ENCODE measurements at regions of chr19 and their contacts with region 1.

Region 1: GRCh38 chr19:3094601-3095437 is 657 bp downstream of the GNA11 start:
- DNase-seq: peak in 4 of 9 experiments; percentile 43 to 59 (median 58)
- ATAC-seq: peak; percentile 6
- H3K4me3 ChIP-seq: peak overlapping the region; percentile 34 to 62
- H3K4me3 Mint-ChIP-seq: peak overlapping the region; percentile 77
- H3K27ac ChIP-seq: no peak overlapping the region
- H3K27ac Mint-ChIP-seq: peak overlapping the region; percentile 60
- H3K4me1 ChIP-seq: peaks cover 42% of the 10 kb centered on the region
- H3K4me1 Mint-ChIP-seq: peaks cover 24% of the 10 kb centered on the region
- H3K27me3 ChIP-seq: peaks cover 0 to 20% of the 10 kb centered on the region in 2 experiments
- H3K27me3 Mint-ChIP-seq: peaks cover 6% of the 10 kb centered on the region
- CTCF ChIP-seq: no peak

Region 2: GRCh38 chr19:2977001-2977685 is 117.7 kb before region 1 on chr19 and contains the start of gene TLE6:
- CTCF ChIA-PET with region 1: no interaction called
- POLR2A ChIA-PET with region 1: no interaction called
- intact Hi-C with region 1: loop called in 1 of 2 experiments (anchors 1 kb)
- DNase-seq: peak; percentile 87 to 96 (median 93)
- ATAC-seq: peak; percentile 99
- H3K4me3 ChIP-seq: peak within 1 kb of the TSS; percentile 67 to 84
- H3K4me3 Mint-ChIP-seq: peak within 1 kb of the TSS; percentile 93
- H3K27ac ChIP-seq: no peak within 1 kb of the TSS
- H3K27ac Mint-ChIP-seq: peak within 1 kb of the TSS; percentile 52
- H3K4me1 ChIP-seq: peaks cover 12% of the 10 kb centered on the region
- H3K4me1 Mint-ChIP-seq: peaks cover 16% of the 10 kb centered on the region
- H3K27me3 ChIP-seq: no peaks in the 10 kb centered on the region
- H3K27me3 Mint-ChIP-seq: peaks cover 6% of the 10 kb centered on the region
- CTCF ChIP-seq: no peak
- total RNA-seq, gene TLE6: not detected

Region 3: GRCh38 chr19:3224346-3225168 is 129.7 kb after region 1 on chr19 and contains the start of gene CELF5:
- CTCF ChIA-PET with region 1: no interaction called
- POLR2A ChIA-PET with region 1: no interaction called
- intact Hi-C with region 1: no loop called
- DNase-seq: peak; percentile 19 to 77 (median 58)
- ATAC-seq: peak; percentile 84
- H3K4me3 ChIP-seq: no peak within 1 kb of the TSS
- H3K4me3 Mint-ChIP-seq: peak within 1 kb of the TSS; percentile 55
- H3K27ac ChIP-seq: no peak within 1 kb of the TSS
- H3K27ac Mint-ChIP-seq: no peak within 1 kb of the TSS
- H3K4me1 ChIP-seq: peaks cover 2% of the 10 kb centered on the region
- H3K4me1 Mint-ChIP-seq: peaks cover 1% of the 10 kb centered on the region
- H3K27me3 ChIP-seq: peaks cover 0 to 3% of the 10 kb centered on the region in 2 experiments
- H3K27me3 Mint-ChIP-seq: peaks cover 17% of the 10 kb centered on the region
- CTCF ChIP-seq: peak; percentile 29
- total RNA-seq, gene CELF5: 0.84 TPM in 1 of 2 experiments, not detected in the other

Measured in CD8-positive, alpha-beta T cell (primary cell).